Heart left ventricle (tissue), 16 donors: ENCODE measurements at regions of chr19 and their contacts with region 1.

Region 1: GRCh38 chr19:35748106-35749020 is at the start of gene LIN37:
- DNase-seq: peak; percentile 98 to 100 (median 99)
- ATAC-seq: peak; percentile 83 to 90 (median 88)
- H3K4me3 ChIP-seq: peak within 1 kb of the TSS; percentile 64 to 95 (median 86)
- H3K27ac ChIP-seq: peak within 1 kb of the TSS in 11 of 12 donors; percentile 64 to 94 (median 80)
- H3K4me1 ChIP-seq: peaks cover 10 to 54% (median 32%) of the 10 kb centered on the region in 12 donors
- H3K27me3 ChIP-seq: no peaks in the 10 kb centered on the region
- CTCF ChIP-seq: peak in 6 of 12 donors; percentile 13 to 54 (median 20)
- POLR2A ChIP-seq: peak; percentile 94 to 98
- total RNA-seq, gene LIN37: 3.7 to 12.2 (median 7.6) TPM

Region 2: GRCh38 chr19:35648017-35648961 is 100.1 kb before region 1 on chr19 and contains the start of gene COX6B1:
- intact Hi-C with region 1: loop called in 1 of 10 experiments (anchors 5 kb)
- DNase-seq: peak; percentile 92 to 97 (median 95)
- ATAC-seq: peak; percentile 78 to 88 (median 84)
- H3K4me3 ChIP-seq: peak within 1 kb of the TSS; percentile 66 to 96 (median 79)
- H3K27ac ChIP-seq: peak within 1 kb of the TSS; percentile 84 to 98 (median 94)
- H3K4me1 ChIP-seq: peaks cover 0 to 55% (median 32%) of the 10 kb centered on the region in 12 donors
- H3K27me3 ChIP-seq: no peaks in the 10 kb centered on the region
- CTCF ChIP-seq: no peak
- POLR2A ChIP-seq: peak in 1 of 2 donors; percentile 80
- total RNA-seq, gene COX6B1: 944 to 3,219 (median 1,334) TPM